Right ventricle myocardium inferior (tissue), 1 donor: ENCODE measurements at regions of chr17 and their contacts with region 1.

Region 1: GRCh38 chr17:46841561-46842379 is 9.6 kb upstream of the WNT9B start:
- DNase-seq: no peak
- ATAC-seq: peak; percentile 46

Region 2: GRCh38 chr17:46764000-46764708 is 77.6 kb before region 1 on chr17:
- intact Hi-C with region 1: no loop called
- DNase-seq: no peak
- ATAC-seq: no peak

Region 3: DNA sequence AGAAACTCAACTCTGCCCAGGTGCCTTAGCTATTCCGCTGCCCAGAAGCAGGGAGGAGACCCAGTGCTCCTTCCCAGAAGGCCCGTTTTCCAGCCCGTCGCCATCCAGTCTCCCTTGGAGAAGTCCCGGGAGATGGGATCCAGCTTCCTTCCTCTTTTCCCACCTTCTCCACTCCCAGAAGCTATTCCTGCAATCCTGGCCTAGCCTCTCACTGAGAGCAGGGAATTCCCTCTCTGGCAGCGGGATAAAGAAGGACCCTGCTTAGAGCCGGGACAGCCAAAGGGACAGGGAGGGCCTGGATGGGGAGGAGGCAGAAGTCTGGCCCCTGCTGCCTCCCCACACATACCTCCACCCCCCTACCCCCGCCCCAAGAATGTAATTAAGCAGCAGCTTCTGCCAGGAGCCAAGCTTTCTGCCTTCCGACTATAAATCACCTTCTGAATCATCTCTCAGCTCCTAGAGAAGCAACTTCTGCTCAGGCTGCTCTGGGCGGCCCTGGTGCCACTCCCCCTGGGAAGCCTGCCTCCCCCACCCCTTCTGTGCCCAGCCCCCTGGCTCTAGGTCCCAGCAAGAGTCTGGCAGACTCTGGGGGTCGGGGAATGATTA is 29.7 kb before region 1 on chr17:
- intact Hi-C with region 1: no loop called
- DNase-seq: no peak
- ATAC-seq: no peak

Region 4: GRCh38 chr17:46929413-46929812 is 87.6 kb after region 1 on chr17:
- intact Hi-C with region 1: no loop called
- DNase-seq: no peak
- ATAC-seq: no peak

Region 5: GRCh38 chr17:46940621-46941404 is 99.0 kb after region 1 on chr17:
- intact Hi-C with region 1: loop called (anchors 2 kb)
- DNase-seq: peak; percentile 81
- ATAC-seq: peak; percentile 73